ENCODE measurements at regions of chr1 and their contacts with region 1.

Region 1: GRCh38 chr1:116498789-116499628 is 71.8 kb downstream of the CD58 start:
- DNase-seq: no peak
- ATAC-seq: peak; percentile 80

Region 2: GRCh38 chr1:116006486-116006964 is 492.5 kb before region 1 on chr1:
- intact Hi-C with region 1: no loop called
- DNase-seq: no peak
- ATAC-seq: no peak

Region 3: GRCh38 chr1:116139592-116140134 is 359.3 kb before region 1 on chr1:
- intact Hi-C with region 1: loop called (anchors 5 kb)
- DNase-seq: no peak
- ATAC-seq: peak; percentile 15

Region 4: DNA sequence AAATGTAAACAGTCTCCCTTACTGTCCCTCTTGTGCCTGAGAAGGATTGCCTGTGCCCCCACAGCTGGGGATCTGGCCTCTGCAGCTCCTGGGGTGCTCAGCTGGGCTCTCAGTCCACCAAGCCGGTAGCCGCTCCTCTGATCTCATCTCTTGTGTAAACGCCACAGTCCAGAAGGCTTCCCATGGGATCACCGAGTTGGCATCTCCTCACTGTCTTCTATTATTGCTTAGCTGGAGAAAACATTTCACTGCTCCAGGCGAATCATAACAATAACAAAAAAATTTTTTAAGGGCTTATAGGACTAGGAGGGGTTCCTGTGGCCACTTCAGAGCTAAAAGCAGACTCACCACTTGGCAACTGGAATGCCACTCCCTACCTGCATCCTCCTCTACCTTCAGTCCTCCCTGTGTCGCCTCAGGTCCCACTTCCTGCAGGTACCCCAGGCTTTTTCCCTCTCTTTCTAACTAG is 50.2 kb before region 1 on chr1:
- intact Hi-C with region 1: no loop called
- DNase-seq: no peak
- ATAC-seq: no peak

Region 5: DNA sequence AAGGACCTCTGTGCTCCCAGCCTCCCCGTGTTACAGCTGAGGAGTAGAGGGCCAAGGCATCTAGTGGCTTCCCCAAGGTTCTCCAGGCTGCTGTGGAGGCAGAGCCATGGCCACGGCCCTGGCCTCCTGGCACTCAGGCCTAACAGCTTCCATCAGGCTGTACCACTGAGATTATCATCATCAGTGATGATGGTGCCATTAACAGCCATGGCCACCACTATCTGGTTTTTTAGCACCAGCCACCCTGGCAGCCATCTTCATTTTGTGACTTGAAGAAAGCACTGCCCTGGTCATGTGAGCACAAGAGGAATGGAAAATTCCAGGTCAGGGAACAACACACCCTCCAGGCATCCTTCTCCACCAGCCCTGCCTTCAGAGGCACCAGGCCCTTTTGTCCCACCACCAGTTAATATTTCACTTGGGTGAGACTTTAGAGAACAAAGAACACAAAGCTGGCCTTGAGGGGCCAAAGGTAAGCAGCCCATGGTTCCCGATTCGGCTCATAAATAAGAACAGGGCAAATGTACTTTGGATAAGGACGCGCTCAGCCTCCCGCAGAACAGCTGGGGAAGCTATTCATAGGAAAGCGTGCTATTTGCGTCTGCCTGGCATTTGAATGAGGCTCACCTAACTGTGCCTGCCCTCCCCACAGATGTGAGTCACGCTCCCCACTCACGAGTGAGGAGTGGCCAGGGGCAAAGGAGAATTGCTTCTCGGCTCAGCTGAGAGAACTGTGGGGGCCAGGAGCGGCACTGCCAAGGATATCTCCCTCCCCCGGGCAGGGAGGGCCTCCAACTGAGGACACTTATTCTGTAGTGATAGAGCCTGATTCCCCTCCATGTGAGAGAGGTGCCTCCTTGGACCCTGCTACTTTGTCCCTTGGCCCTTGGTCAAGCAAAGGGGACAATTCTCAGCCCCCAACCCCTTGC is 23.8 kb before region 1 on chr1:
- intact Hi-C with region 1: no loop called
- DNase-seq: no peak
- ATAC-seq: no peak

Measured in sciatic nerve (tissue), 2 donors.